Activated CD8-positive, alpha-beta memory T cell treated with anti-CD3 and anti-CD28 coated beads, Interleukin-2, amount 10 ng/mL, durations not matched to agents 7 days and 5 days (primary cell): ENCODE measurements at regions of chr7 and their contacts with region 1.

Region 1: GRCh38 chr7:37181550-37181932 is 267.1 kb downstream of the ELMO1 start:
- DNase-seq: no peak
- ATAC-seq: no peak
- H3K4me3 Mint-ChIP-seq: no peak overlapping the region
- H3K27ac Mint-ChIP-seq: no peak overlapping the region
- H3K4me1 Mint-ChIP-seq: peaks cover 15% of the 10 kb centered on the region
- H3K27me3 Mint-ChIP-seq: no peaks in the 10 kb centered on the region

Region 2: GRCh38 chr7:36473454-36474282 is 707.9 kb before region 1 on chr7:
- CTCF ChIA-PET with region 1: interaction called, 16 read pairs
- DNase-seq: peak; percentile 51
- ATAC-seq: peak; percentile 52
- H3K4me3 Mint-ChIP-seq: no peak overlapping the region
- H3K27ac Mint-ChIP-seq: no peak overlapping the region
- H3K4me1 Mint-ChIP-seq: peaks cover 19% of the 10 kb centered on the region
- H3K27me3 Mint-ChIP-seq: no peaks in the 10 kb centered on the region

Region 3: DNA sequence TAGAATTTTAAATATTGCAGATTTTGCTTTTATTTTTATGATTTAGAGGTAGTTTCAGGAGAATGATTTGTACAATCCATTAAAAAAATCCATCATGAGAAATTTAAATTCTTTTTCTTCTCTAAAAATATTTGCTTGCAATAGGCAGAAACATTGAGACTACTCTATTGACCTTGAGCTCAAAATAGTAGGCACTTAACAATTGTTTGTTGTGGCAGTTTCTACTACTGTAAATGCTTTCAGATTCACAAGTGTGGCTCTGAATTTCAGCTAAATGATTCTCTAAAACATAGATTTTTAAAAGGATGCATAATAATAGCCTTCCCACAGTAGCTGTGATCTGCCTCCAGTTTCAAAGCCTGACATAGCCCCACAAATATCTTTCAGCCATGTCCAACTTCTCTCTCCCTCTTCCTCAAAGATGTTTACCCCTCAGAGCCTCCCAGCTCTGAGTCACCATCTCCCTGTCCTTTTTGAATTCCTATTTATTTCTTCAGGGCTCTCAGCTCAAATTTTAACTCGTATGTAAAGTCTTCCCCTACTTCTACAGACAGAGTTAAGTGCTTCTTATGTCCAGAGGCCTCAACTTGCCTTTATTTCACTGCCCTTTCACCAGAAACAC is 617.7 kb before region 1 on chr7:
- CTCF ChIA-PET with region 1: no interaction called
- DNase-seq: no peak
- ATAC-seq: no peak
- H3K4me3 Mint-ChIP-seq: no peak overlapping the region
- H3K27ac Mint-ChIP-seq: no peak overlapping the region
- H3K4me1 Mint-ChIP-seq: peaks cover 5% of the 10 kb centered on the region
- H3K27me3 Mint-ChIP-seq: no peaks in the 10 kb centered on the region

Region 4: GRCh38 chr7:36639826-36640225 is 541.7 kb before region 1 on chr7:
- CTCF ChIA-PET with region 1: interaction called, 10 read pairs
- DNase-seq: peak; percentile 91
- ATAC-seq: peak; percentile 98
- H3K4me3 Mint-ChIP-seq: peak overlapping the region; percentile 14
- H3K27ac Mint-ChIP-seq: peak overlapping the region; percentile 94
- H3K4me1 Mint-ChIP-seq: peaks cover 52% of the 10 kb centered on the region
- H3K27me3 Mint-ChIP-seq: no peaks in the 10 kb centered on the region

Region 5: DNA sequence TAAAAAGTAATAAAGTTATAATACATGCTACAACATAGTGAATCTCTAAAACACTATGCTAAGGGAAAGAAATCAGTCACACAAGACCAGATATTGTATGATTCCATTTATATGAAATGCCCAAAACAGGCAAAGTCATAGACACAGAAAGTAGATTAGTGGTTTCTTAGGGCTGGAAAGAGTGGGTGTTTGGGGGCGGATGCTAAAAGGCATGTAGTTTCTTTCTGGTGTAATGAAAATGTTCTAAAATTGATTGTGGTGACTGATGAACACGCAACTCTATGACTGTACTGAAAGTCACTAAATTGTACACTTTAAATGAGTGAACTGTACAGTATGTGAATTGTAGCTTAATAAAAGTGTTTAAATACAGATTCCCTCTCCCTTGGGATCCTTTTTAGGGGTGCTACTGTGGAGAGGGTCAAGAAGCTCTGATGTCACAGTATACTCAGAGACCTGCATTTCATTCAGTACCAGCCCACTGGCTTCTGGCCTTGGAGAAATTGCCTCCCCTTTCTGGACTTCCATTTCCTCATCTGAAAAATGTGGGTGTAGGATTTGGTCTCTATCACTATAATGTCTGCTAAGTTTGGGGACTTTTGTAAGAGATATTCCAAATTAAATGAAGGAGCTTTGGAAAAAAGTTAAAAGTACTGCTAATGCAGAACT is 503.6 kb before region 1 on chr7:
- CTCF ChIA-PET with region 1: interaction called, 29 read pairs
- DNase-seq: peak; percentile 64
- ATAC-seq: peak; percentile 78
- H3K4me3 Mint-ChIP-seq: peak overlapping the region; percentile 42
- H3K27ac Mint-ChIP-seq: peak overlapping the region; percentile 91
- H3K4me1 Mint-ChIP-seq: peaks cover 54% of the 10 kb centered on the region
- H3K27me3 Mint-ChIP-seq: no peaks in the 10 kb centered on the region

Region 6: DNA sequence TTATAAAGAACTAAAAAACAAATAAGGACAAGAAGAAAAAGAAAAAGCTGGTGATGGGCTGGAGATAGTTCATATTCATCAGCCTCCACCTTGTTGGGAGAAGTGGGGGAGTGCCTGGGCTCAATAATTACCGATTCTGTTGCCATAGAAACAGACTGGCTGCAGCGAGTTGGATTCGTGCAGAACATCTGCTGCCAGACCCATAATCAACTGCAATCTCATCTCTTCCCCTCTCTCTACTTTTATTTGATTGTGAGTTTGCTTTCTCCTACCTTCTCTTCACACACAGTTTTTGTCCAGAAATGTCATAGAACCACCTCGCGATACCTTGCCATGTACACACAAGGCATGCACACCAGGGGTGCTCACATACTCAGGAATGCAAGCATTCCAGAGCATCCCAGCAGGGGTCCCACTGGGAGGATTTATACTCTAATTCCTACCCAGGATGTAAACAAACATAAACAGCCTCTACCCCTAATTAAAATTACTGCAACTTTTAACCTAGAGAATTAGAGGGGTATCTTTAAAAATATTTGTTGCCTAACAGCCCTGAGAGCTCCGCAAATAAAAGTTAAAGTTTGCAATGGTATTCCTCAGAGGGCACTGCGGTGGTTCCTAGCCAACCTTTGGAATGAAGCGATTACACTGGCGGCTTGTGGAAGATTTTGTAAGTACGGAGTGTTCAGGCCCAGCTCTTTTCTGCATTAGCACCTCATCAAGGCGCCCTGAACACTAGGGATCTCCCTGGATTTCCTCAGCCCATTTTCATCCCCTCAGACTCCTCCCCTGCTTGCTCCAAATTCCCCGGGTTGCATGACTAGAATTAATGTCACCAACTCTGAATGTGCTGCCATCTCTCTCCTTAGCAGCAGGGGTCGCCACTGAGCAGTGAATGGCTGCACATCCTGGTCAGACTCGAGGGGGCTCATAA is 194.8 kb before region 1 on chr7:
- CTCF ChIA-PET with region 1: interaction called, 15 read pairs
- DNase-seq: peak; percentile 76
- ATAC-seq: peak; percentile 64
- H3K4me3 Mint-ChIP-seq: no peak overlapping the region
- H3K27ac Mint-ChIP-seq: no peak overlapping the region
- H3K4me1 Mint-ChIP-seq: peaks cover 13% of the 10 kb centered on the region
- H3K27me3 Mint-ChIP-seq: no peaks in the 10 kb centered on the region